Activated CD4-positive, alpha-beta memory T cell treated with anti-CD3 and anti-CD28 coated beads, Interleukin-2, amount 10 ng/mL, durations not matched to agents 7 days and 5 days (primary cell): ENCODE measurements at regions of chr19 and their contacts with region 1.

Region 1: GRCh38 chr19:49301165-49301865 is 23.7 kb downstream of the SLC6A16 start:
- DNase-seq: peak; percentile 84
- H3K4me3 Mint-ChIP-seq: no peak overlapping the region
- H3K27ac Mint-ChIP-seq: no peak overlapping the region
- H3K4me1 Mint-ChIP-seq: peaks cover 2% of the 10 kb centered on the region
- H3K27me3 Mint-ChIP-seq: peaks cover 14% of the 10 kb centered on the region

Region 2: DNA sequence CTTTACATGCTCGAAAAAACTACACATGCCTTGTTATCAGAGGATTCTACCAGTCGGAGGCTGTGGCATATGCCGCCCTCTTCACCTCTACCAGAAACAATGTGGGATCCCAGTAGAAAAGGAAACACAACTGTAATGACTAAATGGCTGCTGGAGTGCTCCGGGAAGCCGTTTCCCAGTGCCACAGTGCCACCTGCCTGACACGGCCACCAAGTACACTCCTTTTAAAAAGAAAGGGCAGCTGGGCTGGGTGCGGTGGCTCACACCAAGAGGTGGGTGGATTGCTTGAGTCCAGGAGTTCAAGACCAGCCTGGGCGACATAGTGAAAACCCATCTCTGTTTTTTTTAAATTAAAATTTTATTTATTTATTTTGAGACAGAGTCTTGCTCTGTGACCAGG is 76.5 kb before region 1 on chr19:
- CTCF ChIA-PET with region 1: interaction called, 11 read pairs
- POLR2A ChIA-PET with region 1: no interaction called
- DNase-seq: peak; percentile 55
- H3K4me3 Mint-ChIP-seq: no peak overlapping the region
- H3K27ac Mint-ChIP-seq: no peak overlapping the region
- H3K4me1 Mint-ChIP-seq: peaks cover 6% of the 10 kb centered on the region
- H3K27me3 Mint-ChIP-seq: peaks cover 5% of the 10 kb centered on the region

Region 3: GRCh38 chr19:49331616-49332055 is 30.3 kb after region 1 on chr19:
- CTCF ChIA-PET with region 1: interaction called, 24 read pairs
- POLR2A ChIA-PET with region 1: interaction called, 3 read pairs
- DNase-seq: peak; percentile 71
- H3K4me3 Mint-ChIP-seq: no peak overlapping the region
- H3K27ac Mint-ChIP-seq: peak overlapping the region; percentile 44
- H3K4me1 Mint-ChIP-seq: peaks cover 71% of the 10 kb centered on the region
- H3K27me3 Mint-ChIP-seq: no peaks in the 10 kb centered on the region

Region 4: DNA sequence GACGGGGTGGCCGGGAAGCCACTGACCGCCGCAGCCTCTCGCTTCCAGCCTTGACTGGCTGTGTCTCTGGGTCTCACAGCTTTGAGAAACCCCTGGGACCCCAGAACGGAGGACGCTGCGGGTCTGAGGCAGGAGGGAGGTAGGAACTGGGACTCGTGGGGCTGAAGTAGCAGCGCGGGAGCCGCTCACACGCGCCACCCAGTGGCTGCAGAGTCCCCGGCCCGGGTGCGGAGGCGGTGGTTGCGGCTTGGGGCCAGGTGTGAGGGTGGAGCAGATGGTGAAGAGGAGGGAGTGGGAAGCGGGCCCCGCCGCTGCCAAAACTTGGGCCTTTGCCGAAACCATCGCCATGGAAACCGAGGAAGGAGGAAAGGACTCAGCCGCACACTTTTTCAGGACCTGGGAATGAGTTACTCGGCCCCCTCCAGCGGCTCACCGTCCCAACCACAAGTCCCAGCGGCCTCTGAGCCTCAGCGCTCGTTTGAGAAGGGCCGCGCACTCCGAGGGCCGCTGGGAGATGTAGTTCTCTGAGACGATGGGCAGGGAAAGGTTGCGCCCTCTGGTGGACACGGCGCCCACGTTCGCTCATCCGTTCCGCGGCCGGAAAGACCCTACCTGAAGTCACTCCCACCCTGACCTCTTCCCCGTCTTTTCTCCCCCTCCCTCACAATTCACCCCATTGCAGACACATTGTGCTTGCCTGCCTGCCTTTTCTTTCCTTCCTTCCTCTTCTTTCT is 142.2 kb after region 1 on chr19:
- CTCF ChIA-PET with region 1: interaction called, 10 read pairs
- POLR2A ChIA-PET with region 1: no interaction called
- DNase-seq: peak; percentile 95
- H3K4me3 Mint-ChIP-seq: peak overlapping the region; percentile 80
- H3K27ac Mint-ChIP-seq: peak overlapping the region; percentile 83
- H3K4me1 Mint-ChIP-seq: peaks cover 62% of the 10 kb centered on the region
- H3K27me3 Mint-ChIP-seq: peaks cover 38% of the 10 kb centered on the region